Activated CD4-positive, alpha-beta T cell treated with anti-CD3 and anti-CD28 coated beads, Interleukin-2, amount 10 ng/mL, durations not matched to agents 24 days and 14 days (primary cell): ENCODE measurements at regions of chr2 and their contacts with region 1.

Region 1: DNA sequence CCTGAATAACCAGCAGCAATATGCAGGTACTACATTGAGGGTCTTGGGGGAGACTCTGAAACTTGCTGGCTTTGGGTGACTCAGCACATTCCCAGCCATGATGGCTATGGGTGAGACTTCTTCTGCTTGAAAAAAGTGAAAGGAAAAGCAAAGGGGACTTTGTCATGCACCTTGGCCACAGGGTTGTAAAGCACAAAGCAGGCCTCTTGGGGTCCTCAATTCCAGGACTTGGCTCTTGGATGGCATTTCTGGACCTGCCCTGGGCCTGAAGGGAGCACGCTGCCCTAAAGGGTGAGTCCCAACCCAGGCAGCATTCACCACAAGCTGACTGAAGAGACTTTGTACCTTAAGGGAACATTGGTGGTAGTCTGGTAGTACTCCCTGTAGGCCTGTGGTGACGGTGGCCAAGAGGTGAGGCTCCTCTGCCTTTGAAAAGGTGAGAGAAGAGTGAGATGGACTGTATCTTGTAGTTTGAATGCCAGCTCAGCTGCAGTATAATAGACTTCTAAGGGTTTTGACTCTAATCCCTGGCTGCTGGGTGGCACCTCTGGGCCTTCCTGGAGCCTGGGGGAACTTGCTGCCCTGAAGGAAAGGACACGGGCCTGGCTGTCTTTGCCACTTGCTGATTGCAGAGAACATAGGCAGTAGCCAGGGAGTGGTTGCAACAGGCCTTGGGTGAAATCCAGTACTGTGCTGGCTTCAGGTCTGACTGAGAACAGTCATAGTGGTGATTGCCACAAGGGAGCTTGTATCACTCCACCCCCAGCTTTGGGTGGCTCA is 36.5 kb upstream of the CYTIP start:
- DNase-seq: peak; percentile 88
- H3K4me3 Mint-ChIP-seq: peak overlapping the region; percentile 84
- H3K27ac Mint-ChIP-seq: peak overlapping the region; percentile 96
- H3K4me1 Mint-ChIP-seq: peaks cover 77% of the 10 kb centered on the region
- H3K27me3 Mint-ChIP-seq: no peaks in the 10 kb centered on the region

Region 2: DNA sequence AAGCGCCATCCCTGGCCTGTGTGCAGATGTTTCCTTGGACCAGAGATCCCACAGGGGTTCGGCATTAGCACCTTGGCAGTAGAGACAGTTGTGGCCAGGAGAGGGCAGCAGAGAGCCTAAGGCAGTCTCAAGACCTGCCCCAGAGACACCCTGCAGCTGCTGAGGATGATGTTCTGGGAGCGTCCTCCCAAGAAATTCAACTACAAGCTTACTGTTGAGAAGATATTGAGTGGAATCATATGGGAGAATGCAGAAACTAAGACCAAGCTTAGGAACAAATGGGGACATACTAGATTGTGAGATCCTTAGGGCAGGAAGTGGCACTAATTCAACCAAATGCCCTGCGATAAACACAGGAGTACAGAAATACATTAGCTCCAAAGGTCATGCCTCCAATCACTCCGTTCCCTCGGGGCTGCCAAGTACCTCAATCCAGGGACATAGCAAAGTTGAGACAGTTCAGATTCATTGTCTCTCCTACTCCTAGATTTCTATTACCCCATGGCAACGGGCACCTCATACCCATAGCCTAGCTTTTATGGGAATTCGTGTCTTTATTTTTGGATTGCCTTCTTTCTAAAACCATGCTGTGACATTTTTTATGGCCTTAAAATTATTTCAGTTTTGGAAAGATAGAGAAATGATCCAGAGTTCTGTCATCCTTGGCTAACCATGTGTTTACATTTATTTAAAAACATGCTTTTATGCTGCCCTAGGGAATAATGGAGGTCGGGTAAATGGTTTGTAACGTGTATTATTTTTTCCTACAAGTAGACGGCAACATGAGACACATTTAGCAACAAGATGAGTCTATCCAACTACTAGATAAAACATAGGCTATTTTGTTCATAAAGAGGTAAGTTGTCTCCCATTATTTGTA is 152.5 kb before region 1 on chr2:
- intact Hi-C with region 1: loop called (anchors 2 kb)
- DNase-seq: peak; percentile 95
- H3K4me3 Mint-ChIP-seq: peak overlapping the region; percentile 32
- H3K27ac Mint-ChIP-seq: peak overlapping the region; percentile 34
- H3K4me1 Mint-ChIP-seq: peaks cover 37% of the 10 kb centered on the region
- H3K27me3 Mint-ChIP-seq: no peaks in the 10 kb centered on the region

Region 3: DNA sequence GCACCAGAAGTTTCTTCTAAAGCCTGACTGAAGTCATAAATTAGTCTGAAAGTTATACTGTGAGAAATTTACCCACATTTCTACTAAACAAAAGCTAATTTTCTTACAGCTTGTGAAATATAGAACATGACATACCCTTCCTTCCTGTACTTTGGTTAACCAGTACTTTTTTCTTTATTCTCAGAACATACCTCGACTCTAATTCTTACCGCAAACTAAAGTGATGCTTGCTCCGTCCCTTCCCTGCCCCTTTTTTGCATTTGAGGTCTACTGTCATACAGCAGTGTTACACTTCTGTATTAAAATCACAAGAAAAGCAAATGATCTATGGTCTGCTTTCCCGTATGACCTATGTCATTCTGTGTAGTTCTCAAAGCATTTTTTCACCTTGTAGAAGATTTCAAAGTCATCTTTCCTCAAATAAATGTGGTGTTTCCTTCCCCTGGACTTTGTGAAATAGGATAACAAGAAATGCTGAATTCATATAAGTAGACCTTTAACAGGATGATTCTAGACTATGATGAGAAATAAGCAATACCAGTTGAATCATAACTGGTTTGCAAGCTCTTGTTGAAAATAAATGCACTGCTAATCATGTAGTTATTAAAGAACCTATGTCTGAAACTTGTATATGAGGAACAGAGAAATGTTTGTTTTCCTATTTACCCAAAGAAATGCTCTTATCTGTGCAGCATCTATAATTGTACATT is 66.9 kb before region 1 on chr2:
- intact Hi-C with region 1: loop called (anchors 1 kb)
- DNase-seq: peak; percentile 88
- H3K4me3 Mint-ChIP-seq: peak overlapping the region; percentile 87
- H3K27ac Mint-ChIP-seq: peak overlapping the region; percentile 95
- H3K4me1 Mint-ChIP-seq: peaks cover 71% of the 10 kb centered on the region
- H3K27me3 Mint-ChIP-seq: no peaks in the 10 kb centered on the region

Region 4: DNA sequence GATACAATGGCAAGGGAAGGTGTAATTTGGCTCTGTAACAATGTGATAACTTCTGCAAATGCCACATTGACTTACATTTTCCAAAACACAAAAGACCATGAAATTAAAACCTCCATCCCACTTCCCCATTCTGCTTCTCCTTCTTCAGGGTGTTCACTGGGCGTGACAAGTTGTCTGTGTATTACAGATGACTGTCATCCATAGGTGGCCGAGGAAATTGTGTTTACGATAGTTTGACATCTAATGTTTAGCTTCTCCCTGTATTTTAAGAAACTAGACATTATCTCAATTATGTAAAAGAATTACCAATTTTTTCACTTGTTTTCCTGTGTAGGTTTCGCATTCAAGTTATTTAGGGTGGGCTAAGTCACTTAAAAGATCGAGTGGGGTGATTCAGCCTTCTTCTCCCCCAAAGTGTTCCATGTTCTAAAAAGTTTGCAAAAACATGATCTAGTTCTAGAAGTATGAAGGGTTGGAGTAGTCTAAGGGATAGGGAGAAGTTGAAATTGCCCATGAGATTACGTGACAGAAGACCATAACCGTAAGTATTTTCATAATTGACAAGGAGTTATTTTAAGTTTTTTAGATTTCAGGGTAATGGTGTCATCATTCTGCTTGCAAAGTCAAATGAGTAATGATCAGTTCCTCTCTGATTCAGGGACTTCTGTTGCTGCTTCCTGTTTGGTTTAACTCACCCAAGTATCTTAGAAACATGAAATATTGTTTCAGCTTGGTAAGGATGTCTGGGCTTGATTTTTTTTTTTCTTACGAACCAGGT is 11.3 kb before region 1 on chr2:
- intact Hi-C with region 1: loop called (anchors 1 kb)
- DNase-seq: peak; percentile 82
- H3K4me3 Mint-ChIP-seq: peak overlapping the region; percentile 78
- H3K27ac Mint-ChIP-seq: peak overlapping the region; percentile 97
- H3K4me1 Mint-ChIP-seq: peaks cover 82% of the 10 kb centered on the region
- H3K27me3 Mint-ChIP-seq: no peaks in the 10 kb centered on the region

Region 5: DNA sequence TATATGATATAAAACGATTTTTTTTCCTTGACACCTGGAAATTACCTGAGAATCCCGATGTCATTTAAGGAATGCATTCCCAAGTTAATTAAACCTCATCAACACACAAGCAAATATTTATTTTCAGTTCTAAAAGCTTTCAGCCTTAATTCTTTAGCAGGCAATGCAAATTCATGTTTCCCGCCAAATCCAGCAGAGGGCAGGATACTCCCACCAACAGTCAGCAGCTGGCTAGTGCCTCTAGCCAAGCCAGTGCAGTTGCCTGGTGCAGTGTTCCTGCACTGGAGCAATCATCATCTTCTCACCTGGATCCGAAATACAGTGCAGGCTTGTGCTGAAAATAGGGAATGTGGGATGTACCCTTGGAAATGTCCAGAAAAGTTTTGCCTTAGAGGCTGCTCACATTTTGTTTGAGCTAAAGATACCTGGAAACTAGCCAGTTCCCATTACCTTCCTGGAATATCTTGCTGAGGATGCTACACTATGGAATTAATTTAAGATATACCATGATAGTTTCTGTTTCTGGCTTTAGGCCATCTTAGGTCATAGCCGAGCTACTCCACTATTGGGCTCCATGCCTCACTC is 11.9 kb after region 1 on chr2:
- intact Hi-C with region 1: loop called (anchors 1 kb)
- DNase-seq: peak; percentile 91
- H3K4me3 Mint-ChIP-seq: no peak overlapping the region
- H3K27ac Mint-ChIP-seq: no peak overlapping the region
- H3K4me1 Mint-ChIP-seq: peaks cover 56% of the 10 kb centered on the region
- H3K27me3 Mint-ChIP-seq: no peaks in the 10 kb centered on the region

Region 6: DNA sequence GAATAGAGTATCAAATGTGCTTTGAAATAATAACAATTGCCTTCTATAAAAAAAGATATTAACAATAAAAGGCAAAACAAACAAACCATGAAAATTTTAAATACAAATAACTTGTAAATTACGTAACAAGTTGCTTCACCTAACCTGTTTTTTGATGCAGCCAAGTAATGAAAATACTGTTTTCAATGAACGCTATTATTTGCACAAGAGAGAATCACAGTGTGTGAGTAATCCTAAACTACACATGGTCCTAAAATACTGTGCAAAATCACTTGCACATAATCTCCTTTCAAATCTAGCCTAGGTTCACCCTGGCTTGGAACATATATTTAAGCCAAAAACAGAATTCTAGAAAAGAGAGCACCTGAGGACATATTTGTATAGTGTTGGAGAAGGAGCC is 877.3 kb after region 1 on chr2:
- intact Hi-C with region 1: no loop called
- DNase-seq: no peak
- H3K4me3 Mint-ChIP-seq: no peak overlapping the region
- H3K27ac Mint-ChIP-seq: no peak overlapping the region
- H3K4me1 Mint-ChIP-seq: peaks cover 2% of the 10 kb centered on the region
- H3K27me3 Mint-ChIP-seq: no peaks in the 10 kb centered on the region